PC-3 (cell line): ENCODE measurements at regions of chr11 and their contacts with region 1.

Region 1: DNA sequence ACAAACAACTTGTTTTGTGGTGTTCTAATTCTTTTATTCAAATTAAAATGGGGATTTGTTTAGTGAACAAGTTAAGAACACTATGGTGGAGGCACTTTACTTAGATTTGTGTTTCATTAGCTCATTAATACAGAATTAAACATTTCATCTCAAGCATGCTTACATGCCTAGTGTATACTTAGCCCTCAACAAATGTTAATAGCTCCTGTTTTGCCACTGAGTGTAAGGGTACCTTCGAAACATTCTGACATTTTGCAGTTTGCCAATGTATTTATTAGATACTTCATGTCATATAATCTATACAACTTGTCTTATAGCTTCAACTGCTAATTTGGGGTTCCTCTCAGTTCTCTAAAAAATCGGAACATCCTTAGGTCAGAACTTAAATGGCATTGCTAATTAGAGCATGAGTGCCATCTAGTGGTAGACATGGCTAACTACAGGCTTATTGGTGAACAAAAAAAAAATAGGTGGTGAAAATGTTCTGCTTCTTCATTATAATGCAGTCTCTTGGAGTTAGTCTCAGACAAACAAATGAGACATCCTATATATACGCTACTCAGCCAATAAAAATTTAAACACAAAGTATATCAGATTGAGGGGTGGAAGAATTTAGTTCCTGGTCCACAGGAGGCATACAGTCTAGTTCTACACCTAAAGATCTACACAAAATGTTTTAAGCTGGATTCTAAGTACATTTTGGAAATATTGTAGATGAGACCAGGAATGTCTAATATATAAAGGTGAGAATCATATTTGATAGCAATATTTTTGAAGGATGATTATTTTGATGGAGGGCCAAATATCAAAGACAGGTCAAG is 4.9 kb upstream of the CNTN5 start:
- DNase-seq: peak; percentile 74
- ATAC-seq: no peak; the same call in 1 of the 2 replicates
- H3K4me3 ChIP-seq: no peak overlapping the region
- H3K27ac ChIP-seq: no peak overlapping the region
- H3K4me1 ChIP-seq: no peaks in the 10 kb centered on the region
- H3K27me3 ChIP-seq: peaks cover 78% of the 10 kb centered on the region
- CTCF ChIP-seq: peak; percentile 98

Region 2: GRCh38 chr11:97454988-97455387 is 1560.9 kb before region 1 on chr11:
- CTCF ChIA-PET with region 1: no interaction called
- POLR2A ChIA-PET with region 1: no interaction called
- intact Hi-C with region 1: loop called (anchors 5 kb)
- DNase-seq: peak; percentile 43
- ATAC-seq: peak; percentile 31; the same call in 1 of the 2 replicates
- H3K4me3 ChIP-seq: peak overlapping the region; percentile 25; the same call in 1 of the 2 replicates
- H3K27ac ChIP-seq: no peak overlapping the region
- H3K4me1 ChIP-seq: no peaks in the 10 kb centered on the region
- H3K27me3 ChIP-seq: peaks cover 6% of the 10 kb centered on the region; the same call in 1 of the 2 replicates
- CTCF ChIP-seq: peak; percentile 61

Region 3: DNA sequence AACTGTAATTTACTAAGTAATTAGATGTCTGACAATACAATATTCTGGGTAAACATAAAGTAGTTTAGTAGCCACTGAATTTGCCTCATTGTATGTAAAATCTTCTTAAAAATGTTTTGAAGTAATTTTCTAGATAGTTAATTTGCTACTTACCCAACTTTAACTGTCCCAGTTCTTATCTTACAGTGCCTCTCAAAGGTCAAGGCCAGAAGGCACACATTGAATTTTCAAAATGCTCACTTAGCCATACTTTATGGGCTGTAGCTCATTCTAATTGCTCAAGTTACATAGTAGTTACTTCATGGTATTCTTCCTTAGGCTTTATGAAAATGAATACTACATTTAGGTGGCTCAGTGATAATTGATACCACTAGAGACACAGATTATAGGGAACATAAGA is 671.5 kb after region 1 on chr11:
- CTCF ChIA-PET with region 1: no interaction called
- POLR2A ChIA-PET with region 1: no interaction called
- intact Hi-C with region 1: loop called (anchors 5 kb)
- DNase-seq: peak; percentile 22
- ATAC-seq: peak; percentile 70
- H3K4me3 ChIP-seq: no peak overlapping the region
- H3K27ac ChIP-seq: no peak overlapping the region
- H3K4me1 ChIP-seq: no peaks in the 10 kb centered on the region
- H3K27me3 ChIP-seq: no peaks in the 10 kb centered on the region
- CTCF ChIP-seq: peak; percentile 49

Region 4: GRCh38 chr11:99739464-99740089 is 723.7 kb after region 1 on chr11:
- CTCF ChIA-PET with region 1: no interaction called
- POLR2A ChIA-PET with region 1: no interaction called
- intact Hi-C with region 1: loop called (anchors 5 kb)
- DNase-seq: peak; percentile 76
- ATAC-seq: peak; percentile 56; the same call in 1 of the 2 replicates
- H3K4me3 ChIP-seq: no peak overlapping the region
- H3K27ac ChIP-seq: no peak overlapping the region
- H3K4me1 ChIP-seq: no peaks in the 10 kb centered on the region
- H3K27me3 ChIP-seq: peaks cover 23% of the 10 kb centered on the region
- CTCF ChIP-seq: peak; percentile 90